AG04450 (cell line): ENCODE measurements at regions of chr19 and their contacts with region 1.

Region 1: GRCh38 chr19:4400135-4400936 is at the start of gene SH3GL1:
- DNase-seq: peak; percentile 81
- H3K4me3 ChIP-seq: peak within 1 kb of the TSS; percentile 90
- H3K27ac ChIP-seq: peak within 1 kb of the TSS; percentile 61
- H3K27me3 ChIP-seq: no peaks in the 10 kb centered on the region
- CTCF ChIP-seq: peak; percentile 93
- polyA plus RNA-seq, gene SH3GL1: 40.2 and 57.9 TPM in 2 replicates

Region 2: GRCh38 chr19:4415352-4415751 is 15.0 kb after region 1 on chr19:
- CTCF ChIA-PET with region 1: interaction called, 50 read pairs
- POLR2A ChIA-PET with region 1: interaction called, 8 read pairs
- DNase-seq: no peak
- H3K4me3 ChIP-seq: peak overlapping the region; percentile 31; the same call in 1 of the 2 replicates
- H3K27ac ChIP-seq: peak overlapping the region; percentile 52
- H3K27me3 ChIP-seq: no peaks in the 10 kb centered on the region
- CTCF ChIP-seq: no peak

Region 3: DNA sequence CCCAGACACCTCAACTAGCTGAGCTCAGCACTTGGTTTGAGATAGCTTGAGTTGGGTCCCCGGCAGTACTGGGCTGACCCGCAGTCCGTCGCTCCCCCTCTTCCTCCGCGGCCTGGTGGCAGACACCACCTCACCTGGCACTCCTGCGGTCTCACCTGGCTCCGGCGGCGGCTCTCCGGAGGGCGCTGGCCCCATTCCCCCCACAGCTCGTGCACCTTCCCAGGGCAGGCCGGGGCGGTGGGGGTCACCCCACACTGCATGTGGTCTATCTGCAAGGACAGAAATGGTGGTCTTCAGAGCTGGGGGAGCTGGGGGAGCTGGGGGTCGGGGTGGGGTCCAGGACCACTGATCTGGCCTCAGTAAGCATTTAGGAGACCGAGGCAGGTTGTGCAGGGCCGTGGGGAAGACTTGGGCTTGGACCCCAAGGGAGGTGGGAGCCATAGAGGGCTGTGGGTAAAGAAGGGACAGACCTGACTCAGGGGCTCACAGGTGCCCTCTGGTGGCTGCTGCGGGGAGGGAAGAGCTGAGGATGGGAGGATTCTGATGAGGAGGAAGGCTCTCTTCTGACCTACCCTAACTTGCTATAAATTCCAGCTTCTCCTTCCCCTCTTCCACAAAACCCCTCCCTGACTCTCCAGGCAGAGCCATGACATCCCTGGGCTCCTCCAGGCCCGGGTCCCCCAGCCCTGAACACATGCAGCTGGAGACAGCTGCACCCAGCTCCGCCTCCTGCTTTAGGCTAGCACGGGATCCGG is 124.6 kb after region 1 on chr19:
- CTCF ChIA-PET with region 1: no interaction called
- POLR2A ChIA-PET with region 1: no interaction called
- DNase-seq: no peak
- H3K4me3 ChIP-seq: no peak overlapping the region
- H3K27ac ChIP-seq: no peak overlapping the region
- H3K27me3 ChIP-seq: peaks cover 8% of the 10 kb centered on the region
- CTCF ChIP-seq: peak; percentile 77